Endothelial cell of umbilical vein (primary cell): ENCODE measurements at regions of chr14 and their contacts with region 1.

Region 1: DNA sequence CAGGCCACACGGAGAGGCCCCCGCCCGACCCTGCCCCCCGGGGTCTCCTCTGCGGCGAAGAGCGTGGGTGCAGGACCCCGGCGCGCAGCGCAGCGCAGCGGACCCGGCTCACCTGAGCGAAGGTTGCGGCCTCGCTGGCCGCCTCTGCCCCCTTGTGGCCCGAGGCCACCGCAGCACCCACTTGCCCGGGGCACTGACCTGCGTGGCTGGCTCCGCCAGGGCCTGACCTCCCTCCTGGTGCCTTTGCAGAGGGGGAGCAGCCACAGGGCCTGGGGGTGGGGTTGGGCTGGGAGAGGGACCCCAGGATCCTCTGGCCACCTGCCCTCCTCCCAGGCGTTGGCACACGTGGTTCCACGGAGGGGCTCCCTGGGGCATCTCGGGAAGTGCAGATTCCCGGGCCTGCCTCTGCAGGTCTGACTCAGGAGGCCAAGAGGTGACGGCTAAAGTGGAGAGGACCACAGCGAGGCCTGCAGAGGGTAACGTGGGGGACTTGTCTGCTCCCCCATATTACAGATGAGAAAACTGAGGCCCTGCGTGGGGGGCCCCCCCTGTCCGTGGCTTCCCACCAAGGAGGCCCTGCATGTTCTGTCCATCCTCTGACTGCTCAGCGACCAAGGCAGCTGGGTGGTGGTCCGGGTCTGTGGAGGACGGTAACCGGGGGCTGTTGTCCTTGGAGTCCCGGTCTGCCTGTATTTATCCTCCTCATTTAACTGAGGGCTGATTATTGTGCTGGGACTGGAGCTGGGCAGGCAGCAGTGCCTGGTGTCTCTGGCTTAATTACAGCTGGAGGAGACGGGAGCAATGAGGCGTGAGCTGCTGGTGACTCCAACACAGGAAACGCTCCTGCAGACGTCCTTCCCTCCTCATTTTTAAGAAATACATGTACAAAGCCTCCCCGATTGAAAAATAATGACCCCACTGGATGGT is 67.9 kb upstream of the BEGAIN start:
- DNase-seq: no peak
- H3K4me3 ChIP-seq: no peak overlapping the region
- H3K27ac ChIP-seq: no peak overlapping the region
- H3K4me1 ChIP-seq: no peaks in the 10 kb centered on the region
- H3K27me3 ChIP-seq: peaks cover 4 to 15% of the 10 kb centered on the region in 2 experiments
- CTCF ChIP-seq: peak; percentile 70 to 90
- POLR2A ChIP-seq: no peak

Region 2: DNA sequence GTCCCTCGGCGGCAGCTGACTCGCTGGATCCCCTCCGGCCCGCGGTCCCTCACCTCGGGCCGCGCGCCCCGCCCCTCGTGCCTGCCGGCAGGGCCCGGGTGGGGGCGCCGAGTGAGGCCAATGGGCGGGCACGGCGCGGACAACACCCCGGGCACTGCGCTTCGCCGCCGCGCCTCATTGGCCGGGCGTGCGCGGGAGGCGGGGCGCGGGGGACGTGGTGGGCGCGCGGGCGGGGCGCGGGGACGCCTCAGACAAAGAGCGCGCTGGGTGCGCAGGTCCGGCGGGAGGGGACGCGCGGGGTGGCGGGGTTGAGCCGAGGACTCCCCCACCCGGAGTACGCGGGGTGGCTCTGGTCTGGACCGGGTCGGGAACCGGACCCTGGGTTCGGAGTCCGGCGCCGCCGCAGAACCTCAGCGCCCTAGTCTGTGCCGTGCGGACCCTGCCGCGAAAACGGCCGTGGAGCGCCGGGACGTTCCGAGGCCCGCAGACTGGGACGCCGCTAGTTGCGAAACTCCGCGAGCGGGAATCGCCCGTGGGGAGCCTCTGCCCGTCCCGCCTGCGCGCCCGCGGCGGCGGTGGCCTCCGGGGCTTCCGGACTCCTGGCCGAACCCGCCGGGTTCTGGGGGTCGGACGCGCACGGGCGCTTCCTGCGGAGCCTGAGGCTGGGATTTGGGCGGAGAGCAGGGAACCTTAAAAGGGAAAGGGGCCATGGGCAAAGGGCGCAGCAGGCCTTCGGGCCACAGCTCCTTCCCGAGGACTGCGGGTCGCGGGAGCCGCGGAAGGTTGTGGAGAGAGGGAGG is 348.5 kb before region 1 on chr14 and contains the start of gene SLC25A29:
- CTCF ChIA-PET with region 1: no interaction called
- POLR2A ChIA-PET with region 1: no interaction called
- dilution Hi-C with region 1: no loop called
- intact Hi-C with region 1: loop called (anchors 10 kb)
- DNase-seq: peak; percentile 91
- H3K4me3 ChIP-seq: peak within 1 kb of the TSS; percentile 57 to 89 (median 64)
- H3K27ac ChIP-seq: peak within 1 kb of the TSS; percentile 62
- H3K4me1 ChIP-seq: peaks cover 21% of the 10 kb centered on the region
- H3K27me3 ChIP-seq: no peaks in the 10 kb centered on the region
- CTCF ChIP-seq: no peak
- POLR2A ChIP-seq: peak; percentile 84
- total RNA-seq, gene SLC25A29: 108 and 132 TPM in 2 replicates

Region 3: DNA sequence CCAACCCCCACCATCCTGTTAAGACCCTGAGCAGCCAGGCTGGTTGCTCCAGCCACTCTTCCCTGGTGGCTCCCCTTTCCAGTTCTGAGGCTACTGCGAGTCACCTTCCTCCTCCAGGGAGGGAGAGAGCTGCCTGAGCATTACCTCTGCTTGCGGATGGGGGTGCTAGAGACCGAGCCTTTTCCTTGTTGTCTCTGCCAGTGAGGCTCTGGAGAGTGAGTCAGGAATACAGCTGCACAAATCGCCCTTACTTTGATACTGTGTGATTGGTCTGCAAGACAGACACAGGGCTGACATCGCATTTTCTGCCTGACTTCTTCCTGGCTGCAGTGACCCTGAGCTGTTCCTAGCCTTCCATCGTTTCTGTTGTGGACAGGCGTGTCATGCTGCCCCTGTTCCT is 237.6 kb before region 1 on chr14:
- CTCF ChIA-PET with region 1: interaction called, 21 read pairs
- POLR2A ChIA-PET with region 1: no interaction called
- dilution Hi-C with region 1: loop called (anchors 25 kb)
- intact Hi-C with region 1: loop called (anchors 1 kb)
- DNase-seq: peak; percentile 88
- H3K4me3 ChIP-seq: no peak overlapping the region
- H3K27ac ChIP-seq: no peak overlapping the region
- H3K4me1 ChIP-seq: no peaks in the 10 kb centered on the region
- H3K27me3 ChIP-seq: no peaks in the 10 kb centered on the region
- CTCF ChIP-seq: peak; percentile 72 to 82
- POLR2A ChIP-seq: no peak

Region 4: DNA sequence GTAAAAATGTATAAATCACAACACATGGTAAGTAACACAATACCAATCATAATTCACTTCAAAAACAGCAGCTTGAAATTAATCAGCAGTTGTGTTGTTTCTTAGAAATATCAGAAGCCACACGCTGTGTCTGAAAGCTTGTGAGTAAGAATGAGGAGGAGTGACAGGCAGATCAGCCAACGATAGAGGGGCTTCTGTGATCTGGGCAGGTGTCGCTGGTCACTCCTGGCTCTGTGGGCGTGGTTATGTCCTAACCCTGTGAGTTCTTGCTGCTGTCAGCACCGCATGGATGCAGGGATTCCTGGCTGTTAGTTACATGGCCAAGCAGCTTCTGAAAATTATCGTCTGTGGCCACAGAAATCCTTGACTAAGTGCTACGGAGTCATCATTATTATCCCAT is 208.5 kb before region 1 on chr14:
- CTCF ChIA-PET with region 1: no interaction called
- POLR2A ChIA-PET with region 1: no interaction called
- dilution Hi-C with region 1: no loop called
- intact Hi-C with region 1: no loop called
- DNase-seq: no peak
- H3K4me3 ChIP-seq: no peak overlapping the region
- H3K27ac ChIP-seq: no peak overlapping the region
- H3K4me1 ChIP-seq: no peaks in the 10 kb centered on the region
- H3K27me3 ChIP-seq: no peaks in the 10 kb centered on the region
- CTCF ChIP-seq: no peak
- POLR2A ChIP-seq: no peak

Region 5: GRCh38 chr14:100524933-100525243 is 130.2 kb before region 1 on chr14:
- CTCF ChIA-PET with region 1: interaction called, 14 read pairs
- POLR2A ChIA-PET with region 1: no interaction called
- dilution Hi-C with region 1: no loop called
- intact Hi-C with region 1: loop called (anchors 2 kb)
- DNase-seq: no peak
- H3K4me3 ChIP-seq: no peak overlapping the region
- H3K27ac ChIP-seq: no peak overlapping the region
- H3K4me1 ChIP-seq: no peaks in the 10 kb centered on the region
- H3K27me3 ChIP-seq: no peaks in the 10 kb centered on the region
- CTCF ChIP-seq: peak; percentile 13 to 41
- POLR2A ChIP-seq: no peak

Region 6: DNA sequence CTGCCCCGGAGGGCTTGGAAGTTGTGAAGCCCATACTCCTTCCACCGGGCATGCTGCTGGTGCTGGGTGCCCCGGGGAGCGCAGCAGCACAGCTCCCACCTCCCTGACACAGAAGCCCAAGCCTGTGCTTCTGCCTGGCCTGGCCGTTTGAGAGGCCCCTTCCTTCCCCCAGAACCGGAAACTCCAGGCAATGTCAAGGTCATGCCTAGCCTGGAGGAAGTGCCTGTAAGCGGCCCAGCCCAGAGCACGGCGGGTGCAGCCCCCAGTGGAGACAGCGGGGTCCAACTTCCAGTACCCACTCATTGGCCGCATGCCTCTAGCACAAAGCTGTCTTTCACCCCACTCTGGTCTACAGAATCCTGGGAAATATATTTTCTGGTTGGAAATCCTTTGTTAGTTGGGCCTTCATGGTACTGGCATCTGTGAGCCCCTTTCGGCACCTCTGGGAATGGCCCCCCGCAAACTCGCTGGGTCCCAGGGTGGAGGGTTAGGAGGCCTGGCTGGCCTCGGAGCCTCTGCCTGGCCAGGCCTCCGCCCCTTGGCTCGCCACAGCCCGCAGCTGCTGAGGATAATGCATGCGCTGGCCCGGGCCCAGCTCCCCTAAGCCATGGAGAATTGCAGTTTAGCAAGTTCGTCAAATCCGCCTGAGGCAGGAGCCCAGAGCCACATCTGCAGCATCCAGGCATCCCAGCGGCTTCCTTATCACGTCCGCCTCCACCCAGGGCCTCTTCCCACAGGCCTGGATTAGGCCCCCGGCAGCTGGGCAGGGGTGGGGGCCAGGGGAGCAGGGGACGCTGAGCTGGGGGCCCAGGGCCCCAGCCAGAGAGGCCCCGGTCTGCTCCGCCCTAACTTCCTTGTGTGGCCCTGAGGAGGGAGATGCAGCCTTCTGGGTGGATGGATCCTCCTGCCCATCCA is 22.7 kb after region 1 on chr14:
- CTCF ChIA-PET with region 1: interaction called, 11 read pairs
- POLR2A ChIA-PET with region 1: no interaction called
- dilution Hi-C with region 1: no loop called
- intact Hi-C with region 1: no loop called
- DNase-seq: no peak
- H3K4me3 ChIP-seq: no peak overlapping the region
- H3K27ac ChIP-seq: no peak overlapping the region
- H3K4me1 ChIP-seq: peaks cover 8% of the 10 kb centered on the region
- H3K27me3 ChIP-seq: peaks cover 0 to 2% of the 10 kb centered on the region in 2 experiments
- CTCF ChIP-seq: no peak
- POLR2A ChIP-seq: no peak

Region 7: GRCh38 chr14:100692859-100693558 is 37.9 kb after region 1 on chr14:
- CTCF ChIA-PET with region 1: interaction called, 11 read pairs
- POLR2A ChIA-PET with region 1: no interaction called
- dilution Hi-C with region 1: no loop called
- intact Hi-C with region 1: no loop called
- DNase-seq: peak; percentile 87
- H3K4me3 ChIP-seq: no peak overlapping the region
- H3K27ac ChIP-seq: peak overlapping the region; percentile 88
- H3K4me1 ChIP-seq: peaks cover 21% of the 10 kb centered on the region
- H3K27me3 ChIP-seq: no peaks in the 10 kb centered on the region
- CTCF ChIP-seq: no peak
- POLR2A ChIP-seq: peak; percentile 68

Region 8: DNA sequence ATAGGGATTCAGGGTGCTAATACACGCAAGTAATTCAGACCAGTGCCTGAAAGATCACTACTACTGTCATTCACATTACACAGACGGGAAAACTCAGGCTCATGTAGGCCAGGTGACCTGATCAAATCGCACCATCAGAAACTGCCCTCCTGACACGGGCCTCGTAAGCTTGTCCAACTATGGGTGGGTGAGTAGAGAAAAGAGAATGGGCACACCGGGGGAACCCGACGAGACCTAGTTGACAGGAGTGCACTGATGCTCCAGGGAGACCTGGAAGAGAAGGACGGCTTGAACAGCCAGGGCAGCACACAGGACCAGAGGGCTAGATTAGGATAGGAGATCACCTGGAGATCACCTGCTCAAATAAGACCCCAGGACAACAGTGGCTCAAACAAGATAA is 739.3 kb after region 1 on chr14:
- CTCF ChIA-PET with region 1: no interaction called
- POLR2A ChIA-PET with region 1: no interaction called
- dilution Hi-C with region 1: no loop called
- intact Hi-C with region 1: no loop called
- DNase-seq: no peak
- H3K4me3 ChIP-seq: no peak overlapping the region
- H3K27ac ChIP-seq: no peak overlapping the region
- H3K4me1 ChIP-seq: no peaks in the 10 kb centered on the region
- H3K27me3 ChIP-seq: no peaks in the 10 kb centered on the region
- CTCF ChIP-seq: no peak
- POLR2A ChIP-seq: no peak